ENCODE measurements at regions of chr5 and their contacts with region 1.

Region 1: DNA sequence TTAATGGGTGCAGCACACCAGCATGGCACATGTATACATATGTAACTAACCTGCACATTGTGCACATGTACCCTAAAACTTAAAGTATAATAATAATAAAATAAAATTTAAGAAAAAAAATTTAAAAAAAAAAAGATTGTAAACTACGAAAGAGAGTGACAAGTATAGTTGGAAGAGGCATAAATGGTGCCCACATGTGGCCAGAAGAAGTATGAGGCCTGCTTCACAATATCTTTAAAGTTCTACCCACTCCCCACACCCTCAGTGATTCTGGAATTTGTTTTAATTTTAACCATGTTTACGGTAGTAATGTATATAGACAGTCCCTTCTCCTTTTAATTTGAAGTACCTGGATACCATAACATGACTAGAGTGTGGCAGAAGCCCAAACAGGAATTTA is 172.7 kb downstream of the CHSY3 start:
- DNase-seq: no peak
- H3K4me3 ChIP-seq: no peak overlapping the region
- H3K27ac ChIP-seq: no peak overlapping the region
- H3K4me1 ChIP-seq: no peaks in the 10 kb centered on the region
- H3K27me3 ChIP-seq: no peaks in the 10 kb centered on the region
- CTCF ChIP-seq: no peak
- POLR2A ChIP-seq: no peak

Region 2: DNA sequence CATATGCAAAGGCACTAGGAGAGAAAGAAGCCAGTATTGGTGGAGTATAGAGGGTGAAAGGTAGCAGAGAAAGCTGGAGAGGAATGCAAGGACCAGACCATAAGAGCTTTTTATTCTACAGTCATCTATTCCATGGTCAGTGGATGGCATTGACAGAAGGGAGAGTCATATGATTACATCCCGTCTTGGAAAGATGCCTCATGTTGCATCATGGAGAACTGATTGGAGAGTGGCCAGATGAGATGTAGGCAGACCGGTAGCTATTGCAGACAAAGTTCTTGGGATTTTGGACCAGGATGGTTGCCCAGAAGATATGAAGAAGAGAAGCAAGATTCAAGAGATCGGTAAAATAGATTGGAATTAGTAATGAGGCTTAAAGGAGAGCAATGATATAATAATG is 88.0 kb after region 1 on chr5:
- intact Hi-C with region 1: loop called (anchors 5 kb)
- DNase-seq: no peak
- H3K4me3 ChIP-seq: no peak overlapping the region
- H3K27ac ChIP-seq: no peak overlapping the region
- H3K4me1 ChIP-seq: no peaks in the 10 kb centered on the region
- H3K27me3 ChIP-seq: no peaks in the 10 kb centered on the region
- CTCF ChIP-seq: no peak
- POLR2A ChIP-seq: no peak

Measured in prostate gland (tissue), 2 donors.